Activated B cell treated with CpG ODN at 0.5 μM for 24 hours (primary cell): ENCODE measurements at regions of chr1 and their contacts with region 1.

Region 1: GRCh38 chr1:174322202-174322862 is 125.4 kb upstream of the GPR52 start:
- DNase-seq: no peak
- ATAC-seq: no peak
- H3K4me3 Mint-ChIP-seq: no peak overlapping the region
- H3K27ac Mint-ChIP-seq: no peak overlapping the region
- H3K4me1 Mint-ChIP-seq: peaks cover 38% of the 10 kb centered on the region
- H3K27me3 Mint-ChIP-seq: no peaks in the 10 kb centered on the region
- CTCF ChIP-seq: no peak

Region 2: DNA sequence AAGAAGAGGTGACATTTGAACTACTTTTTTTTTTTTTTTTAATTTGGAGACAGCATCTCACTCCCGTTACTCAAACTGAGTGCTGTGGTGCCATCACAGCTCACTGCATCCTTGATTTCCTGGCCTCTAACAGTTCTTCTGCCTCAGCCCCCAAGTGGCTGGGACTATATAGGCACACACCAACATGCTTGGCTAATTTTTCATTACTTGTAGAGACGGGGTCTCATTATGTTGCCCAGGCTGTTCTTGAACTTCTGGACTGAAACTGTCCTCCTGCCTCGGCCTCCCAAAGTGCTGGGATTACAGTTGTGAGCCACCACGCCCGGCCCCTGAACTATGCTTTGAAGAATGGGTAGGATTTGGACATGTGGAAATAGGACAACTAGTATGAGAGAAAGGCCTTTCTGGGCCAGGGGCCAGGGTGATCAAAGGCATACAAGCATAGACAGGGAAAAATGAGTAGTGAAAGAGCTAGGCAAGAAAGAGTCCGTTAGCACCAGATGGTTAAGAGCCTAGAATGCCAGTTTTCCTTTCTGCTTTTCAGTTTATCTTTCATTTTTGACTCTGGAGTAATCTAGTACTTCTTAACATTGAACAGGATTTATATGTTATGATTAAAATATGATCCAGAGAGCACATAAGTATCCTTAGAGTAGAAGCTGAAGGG is 156.7 kb before region 1 on chr1:
- CTCF ChIA-PET with region 1: no interaction called
- POLR2A ChIA-PET with region 1: interaction called, 15 read pairs
- intact Hi-C with region 1: no loop called
- DNase-seq: no peak
- ATAC-seq: peak; percentile 59
- H3K4me3 Mint-ChIP-seq: peak overlapping the region; percentile 12
- H3K27ac Mint-ChIP-seq: peak overlapping the region; percentile 77
- H3K4me1 Mint-ChIP-seq: peaks cover 93% of the 10 kb centered on the region
- H3K27me3 Mint-ChIP-seq: no peaks in the 10 kb centered on the region
- CTCF ChIP-seq: no peak

Region 3: GRCh38 chr1:174191255-174191906 is 131.0 kb before region 1 on chr1:
- CTCF ChIA-PET with region 1: no interaction called
- POLR2A ChIA-PET with region 1: no interaction called
- intact Hi-C with region 1: no loop called
- DNase-seq: no peak
- ATAC-seq: no peak
- H3K4me3 Mint-ChIP-seq: no peak overlapping the region
- H3K27ac Mint-ChIP-seq: no peak overlapping the region
- H3K4me1 Mint-ChIP-seq: peaks cover 42% of the 10 kb centered on the region
- H3K27me3 Mint-ChIP-seq: no peaks in the 10 kb centered on the region
- CTCF ChIP-seq: no peak

Region 4: DNA sequence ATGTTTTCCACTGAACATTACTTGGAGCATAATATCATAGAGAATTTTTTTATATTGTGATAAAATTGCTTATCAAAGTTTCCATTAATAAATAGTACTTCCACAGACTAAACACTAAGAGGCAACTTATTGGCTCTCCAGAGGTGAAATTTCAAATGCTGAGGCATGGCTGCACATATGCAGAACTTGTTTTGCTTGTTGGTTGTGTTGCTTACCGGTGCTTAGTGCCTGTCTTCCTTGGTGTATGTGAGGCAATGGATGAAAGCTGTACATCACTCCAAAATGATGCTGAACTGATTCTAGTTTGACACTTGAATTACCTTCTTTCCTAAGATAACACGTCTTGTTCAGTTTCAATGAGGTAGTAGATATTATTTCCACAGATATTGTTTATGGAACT is 95.6 kb after region 1 on chr1:
- CTCF ChIA-PET with region 1: no interaction called
- POLR2A ChIA-PET with region 1: no interaction called
- intact Hi-C with region 1: no loop called
- DNase-seq: no peak
- ATAC-seq: no peak
- H3K4me3 Mint-ChIP-seq: no peak overlapping the region
- H3K27ac Mint-ChIP-seq: no peak overlapping the region
- H3K4me1 Mint-ChIP-seq: peaks cover 35% of the 10 kb centered on the region
- H3K27me3 Mint-ChIP-seq: no peaks in the 10 kb centered on the region
- CTCF ChIP-seq: no peak